K562 (cell line): ENCODE measurements at regions of chr22 and their contacts with region 1.

Region 1: GRCh38 chr22:19806213-19807145 is 45.9 kb downstream of the TBX1 start:
- DNase-seq: peak; percentile 91 to 100 (median 98)
- ATAC-seq: peak; percentile 95
- H3K4me3 ChIP-seq: no peak overlapping the region
- H3K27ac ChIP-seq: no peak overlapping the region
- H3K4me1 ChIP-seq: peaks cover 13 to 68% of the 10 kb centered on the region in 2 experiments
- H3K27me3 ChIP-seq: no peaks in the 10 kb centered on the region
- CTCF ChIP-seq: no peak; a peak in 1 of 6 replicates
- EP300 ChIP-seq: peak; percentile 68
- POLR2A ChIP-seq: no peak
- RAD21 ChIP-seq: peak in 1 of 2 experiments; percentile 22; a peak in 2 of 4 replicates

Region 2: GRCh38 chr22:19818324-19819215 is 12.1 kb after region 1 on chr22:
- CTCF ChIA-PET with region 1: no interaction called
- POLR2A ChIA-PET with region 1: interaction called, 11 read pairs
- in situ Hi-C with region 1: no loop called
- intact Hi-C with region 1: no loop called
- DNase-seq: no peak
- ATAC-seq: no peak
- H3K4me3 ChIP-seq: no peak overlapping the region
- H3K27ac ChIP-seq: no peak overlapping the region
- H3K4me1 ChIP-seq: peaks cover 22 to 81% of the 10 kb centered on the region in 2 experiments
- H3K27me3 ChIP-seq: no peaks in the 10 kb centered on the region
- CTCF ChIP-seq: peak in 2 of 3 experiments; percentile 13 to 21; a peak in 1 of 6 replicates
- EP300 ChIP-seq: no peak
- POLR2A ChIP-seq: no peak
- RAD21 ChIP-seq: no peak

Region 3: DNA sequence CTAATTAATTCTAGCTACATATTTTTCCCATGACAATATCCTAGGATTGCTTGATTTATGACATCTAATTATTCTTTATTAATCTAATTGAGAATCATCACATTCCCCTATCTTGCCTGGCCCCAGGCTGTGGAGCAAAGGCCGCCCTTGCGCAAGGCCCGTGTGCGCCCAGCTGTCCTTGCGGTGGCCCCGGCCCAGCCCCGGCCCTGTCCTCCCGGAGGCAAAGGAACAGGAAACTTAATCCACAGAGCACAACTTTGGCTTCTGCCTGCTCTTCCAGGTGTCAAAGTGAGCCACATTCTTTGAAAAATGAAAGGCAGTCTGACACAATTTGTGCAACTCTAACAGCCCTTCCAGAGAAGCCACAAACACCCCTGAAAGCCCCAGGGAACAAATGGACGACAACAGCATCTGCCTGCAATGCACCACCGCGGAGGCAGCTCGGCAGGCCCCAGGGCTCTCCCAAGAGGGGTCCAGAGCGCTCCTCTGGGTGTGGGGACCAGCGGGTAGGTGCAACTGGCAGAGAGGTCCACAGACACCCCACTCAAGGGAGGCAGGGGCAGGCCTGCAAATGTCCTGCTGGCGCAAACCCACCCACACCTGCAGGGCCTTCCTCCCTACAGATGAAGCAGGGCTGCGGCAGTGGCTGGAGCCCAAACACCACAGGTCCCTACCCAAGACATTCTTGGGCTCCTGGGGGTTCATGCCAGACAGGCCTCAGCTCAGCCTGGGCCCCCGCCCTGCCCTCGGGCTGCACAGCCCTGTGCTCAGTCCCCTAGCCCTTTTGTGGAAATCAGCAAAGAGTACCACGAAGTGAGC is 17.9 kb after region 1 on chr22:
- CTCF ChIA-PET with region 1: no interaction called
- POLR2A ChIA-PET with region 1: interaction called, 5 read pairs
- in situ Hi-C with region 1: no loop called
- intact Hi-C with region 1: loop called (anchors 2 kb)
- DNase-seq: no peak
- ATAC-seq: no peak
- H3K4me3 ChIP-seq: no peak overlapping the region
- H3K27ac ChIP-seq: no peak overlapping the region
- H3K4me1 ChIP-seq: peaks cover 13 to 52% of the 10 kb centered on the region in 2 experiments; a peak in 4 of 5 replicates
- H3K27me3 ChIP-seq: no peaks in the 10 kb centered on the region
- CTCF ChIP-seq: no peak
- EP300 ChIP-seq: no peak
- POLR2A ChIP-seq: no peak
- RAD21 ChIP-seq: no peak

Region 4: DNA sequence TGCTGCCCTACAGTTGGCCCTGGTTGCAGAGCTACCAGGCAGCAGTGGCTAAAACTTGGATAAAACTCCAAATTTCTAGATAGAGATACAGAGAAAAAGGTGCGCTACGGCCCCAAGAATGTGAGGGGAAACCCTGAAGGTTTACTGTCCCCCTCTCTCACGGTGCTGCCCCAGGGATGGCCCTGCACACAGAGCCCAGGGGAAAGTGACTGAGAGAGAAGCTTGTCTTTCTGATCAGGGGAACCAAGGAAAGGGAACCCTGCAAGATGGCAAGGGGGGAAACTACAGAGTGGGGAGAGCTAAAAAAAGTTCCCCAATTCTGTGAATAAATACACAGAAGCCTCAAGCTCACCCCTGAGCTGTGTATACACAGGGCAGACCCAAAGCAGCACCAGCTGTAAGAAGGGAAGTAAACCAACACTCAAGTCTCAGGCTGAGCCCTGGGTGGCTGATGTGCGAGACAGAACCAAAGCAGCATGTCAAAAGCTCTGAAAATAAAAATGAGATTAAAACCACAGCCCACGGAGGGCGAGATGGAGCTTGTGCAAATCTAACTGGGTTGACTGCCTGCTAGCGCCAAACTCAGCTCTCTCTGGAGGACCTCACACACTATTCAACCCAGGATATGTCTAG is 26.1 kb after region 1 on chr22:
- CTCF ChIA-PET with region 1: no interaction called
- POLR2A ChIA-PET with region 1: interaction called, 20 read pairs
- in situ Hi-C with region 1: no loop called
- intact Hi-C with region 1: loop called (anchors 2 kb)
- DNase-seq: no peak
- ATAC-seq: peak; percentile 57
- H3K4me3 ChIP-seq: no peak overlapping the region
- H3K27ac ChIP-seq: no peak overlapping the region
- H3K4me1 ChIP-seq: peaks cover 0 to 8% of the 10 kb centered on the region in 2 experiments; a peak in 3 of 5 replicates
- H3K27me3 ChIP-seq: no peaks in the 10 kb centered on the region
- CTCF ChIP-seq: no peak
- EP300 ChIP-seq: no peak
- POLR2A ChIP-seq: no peak
- RAD21 ChIP-seq: no peak